Psoas muscle (tissue), 8 donors: ENCODE measurements at regions of chr21 and their contacts with region 1.

Region 1: DNA sequence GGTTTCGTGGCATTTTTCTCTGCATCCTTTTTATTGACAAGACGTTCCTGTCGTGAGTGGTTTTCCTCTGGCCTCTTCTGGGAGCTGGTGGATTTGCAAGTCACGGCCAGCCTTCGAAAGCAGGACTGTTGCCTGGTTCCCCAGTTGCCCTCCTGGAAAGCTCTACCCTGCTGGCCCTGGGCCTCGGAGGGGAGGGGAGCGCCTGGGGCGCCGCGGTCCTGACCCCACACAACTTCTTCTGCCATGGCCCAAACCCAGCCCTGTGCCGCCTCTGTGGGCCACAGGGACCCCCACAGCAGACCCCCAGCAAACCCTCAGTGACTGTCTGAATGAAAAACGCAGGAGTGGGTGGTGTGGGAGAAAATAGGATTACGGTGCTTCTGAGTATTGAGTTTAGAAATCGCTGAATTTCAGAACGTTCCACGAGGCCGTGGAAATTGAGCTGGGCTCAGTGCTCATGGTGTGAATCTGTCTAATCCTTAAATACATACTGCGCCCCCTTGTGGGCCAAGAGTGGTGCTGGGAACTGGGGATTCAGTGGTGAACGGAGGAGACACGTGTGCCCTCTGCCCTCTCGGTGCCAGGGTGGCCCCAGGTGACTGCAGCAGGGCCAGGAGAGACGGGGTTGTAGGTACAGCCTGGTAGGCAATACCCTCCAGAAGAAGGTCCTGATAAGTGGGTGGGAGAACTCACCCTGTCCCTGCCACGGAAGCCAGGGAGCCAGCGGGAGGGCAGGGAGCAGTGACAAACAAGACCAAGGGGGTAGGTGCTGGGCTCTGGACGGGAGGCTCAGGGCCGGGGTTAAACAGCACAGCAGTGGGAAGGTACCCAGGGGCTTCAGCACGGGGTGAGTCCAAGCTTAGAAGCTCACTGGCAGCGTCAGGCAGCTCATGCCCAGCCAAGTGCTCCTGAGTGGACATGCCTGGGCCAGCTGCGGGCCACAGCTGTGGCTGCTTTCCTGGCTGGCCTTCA is 101.2 kb upstream of the COL6A1 start:
- DNase-seq: peak; percentile 56 to 80
- ATAC-seq: peak; percentile 43 to 63 (median 60)
- H3K4me3 ChIP-seq: no peak overlapping the region
- H3K27ac ChIP-seq: no peak overlapping the region
- H3K4me1 ChIP-seq: no peaks in the 10 kb centered on the region
- H3K27me3 ChIP-seq: peaks cover 0 to 83% (median 12%) of the 10 kb centered on the region in 3 donors
- CTCF ChIP-seq: peak; percentile 30

Region 2: DNA sequence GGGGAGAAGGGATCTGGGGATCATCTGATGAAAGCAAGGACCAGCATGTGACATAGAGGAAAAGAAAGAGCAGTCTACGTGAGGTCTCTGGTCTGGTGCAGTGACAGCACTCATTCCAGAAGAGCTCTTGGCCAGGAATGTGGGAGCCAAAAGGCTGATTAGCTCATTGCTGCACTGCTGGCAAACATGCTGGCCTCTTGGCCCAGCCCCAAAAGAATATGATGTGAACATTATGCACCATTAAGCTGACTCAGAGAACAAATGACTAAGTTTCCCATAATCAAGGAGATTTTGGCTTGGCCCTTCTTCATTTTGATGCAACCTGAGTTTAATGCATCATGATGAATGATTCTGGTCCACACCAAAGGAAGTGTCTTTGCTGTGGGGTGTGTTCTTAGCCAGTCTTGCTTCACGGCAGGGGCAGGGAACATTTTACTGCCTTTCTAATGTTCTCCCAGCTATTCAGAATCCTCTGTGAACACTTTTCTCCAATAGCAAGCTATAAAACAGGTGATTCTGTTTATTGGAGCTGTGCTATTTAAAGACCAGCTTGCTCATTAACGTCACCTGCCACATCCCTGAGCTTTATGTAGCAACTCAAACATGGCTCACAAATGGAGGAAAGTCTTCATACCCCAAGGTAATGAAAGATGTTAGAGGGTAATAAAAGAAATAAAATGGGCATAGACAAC is 181.7 kb before region 1 on chr21:
- intact Hi-C with region 1: loop called in 1 of 2 experiments (anchors 10 kb)
- DNase-seq: peak in 1 of 2 donors; percentile 36
- ATAC-seq: peak in 1 of 4 donors; percentile 20
- H3K4me3 ChIP-seq: no peak overlapping the region
- H3K27ac ChIP-seq: no peak overlapping the region
- H3K4me1 ChIP-seq: no peaks in the 10 kb centered on the region
- H3K27me3 ChIP-seq: no peaks in the 10 kb centered on the region
- CTCF ChIP-seq: no peak

Region 3: DNA sequence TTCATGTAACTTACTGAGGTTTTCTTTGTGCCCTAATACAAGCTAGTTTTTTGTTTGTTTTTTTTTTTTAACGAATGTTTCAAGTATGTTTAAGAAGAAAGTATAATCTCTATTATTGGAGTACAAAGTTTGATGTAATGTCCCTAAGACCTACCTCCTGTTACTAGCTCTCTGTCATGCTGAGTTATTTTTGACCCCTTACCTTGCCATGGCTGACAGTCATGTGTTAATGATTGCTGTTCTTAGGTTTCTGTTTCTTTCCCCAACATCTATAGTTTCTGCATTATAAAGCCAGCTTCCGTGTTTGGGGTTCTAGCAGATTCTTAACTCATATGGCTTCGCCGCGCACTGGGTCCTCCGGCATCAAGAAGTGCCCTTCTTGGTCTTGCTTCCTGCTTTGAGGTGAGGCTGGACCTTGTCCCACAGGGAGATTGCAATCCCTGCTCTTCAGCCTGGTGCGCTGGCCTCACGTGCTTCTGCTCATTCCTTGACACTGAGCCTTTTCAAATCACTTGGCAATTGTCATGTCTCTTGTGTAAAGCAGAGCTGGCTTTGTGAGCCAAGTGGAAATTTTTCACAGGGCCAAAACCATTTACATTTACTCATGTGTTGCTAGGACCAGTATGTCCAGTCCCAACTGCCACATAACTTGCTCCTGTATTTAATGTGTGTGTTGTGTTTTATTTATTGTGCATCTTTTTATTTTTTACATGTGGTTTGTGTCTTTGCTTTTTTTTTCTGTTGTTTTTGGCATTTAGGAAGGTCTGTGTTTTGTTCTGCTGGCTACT is 33.8 kb before region 1 on chr21:
- intact Hi-C with region 1: no loop called
- DNase-seq: peak in 1 of 2 donors; percentile 38
- ATAC-seq: peak in 1 of 4 donors; percentile 49
- H3K4me3 ChIP-seq: no peak overlapping the region
- H3K27ac ChIP-seq: no peak overlapping the region
- H3K4me1 ChIP-seq: no peaks in the 10 kb centered on the region
- H3K27me3 ChIP-seq: peaks cover 0 to 15% (median 0%) of the 10 kb centered on the region in 3 donors
- CTCF ChIP-seq: no peak